Left cardiac atrium (tissue), 4 donors: ENCODE measurements at regions of chr14 and their contacts with region 1.

Region 1: GRCh38 chr14:64671591-64671990 is 32.6 kb upstream of the PLEKHG3 start:
- DNase-seq: no peak
- ATAC-seq: peak; percentile 52 to 76

Region 2: GRCh38 chr14:64636208-64636979 is 35.2 kb before region 1 on chr14:
- intact Hi-C with region 1: no loop called
- DNase-seq: peak; percentile 71
- ATAC-seq: peak; percentile 89 to 91

Region 3: DNA sequence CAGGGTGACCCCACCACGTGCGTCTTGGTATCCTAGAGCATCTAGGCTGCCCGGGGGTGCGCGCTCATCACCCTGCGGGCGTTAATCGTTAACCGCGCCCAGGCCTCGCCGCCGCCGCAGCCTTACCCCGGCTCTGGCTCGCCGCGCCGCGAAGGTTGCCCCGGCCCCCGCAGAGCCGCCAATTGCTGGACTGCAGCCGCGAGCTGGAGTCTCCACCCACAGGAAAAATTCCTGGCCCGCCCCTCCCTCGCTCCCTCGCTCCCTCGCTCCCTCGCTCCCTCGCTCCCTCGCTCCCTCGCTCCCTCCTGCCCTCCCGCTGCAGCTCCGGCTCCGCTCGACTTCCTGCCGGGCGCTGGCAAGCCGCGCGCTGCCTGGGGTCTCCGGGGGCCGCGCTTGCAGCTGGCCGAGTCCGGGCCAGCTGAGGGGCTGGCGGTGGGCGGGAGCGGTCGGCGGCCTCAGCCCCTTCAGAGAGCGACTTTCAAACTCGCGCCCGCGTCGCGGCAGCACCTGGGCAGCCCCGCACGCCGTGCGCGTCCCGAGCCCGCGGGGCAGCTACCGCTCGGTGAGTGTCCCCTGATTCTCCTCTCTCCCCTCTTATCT is 32.7 kb after region 1 on chr14 and contains the start of gene PLEKHG3:
- intact Hi-C with region 1: no loop called
- DNase-seq: peak; percentile 87
- ATAC-seq: peak; percentile 80 to 86
- total RNA-seq, gene PLEKHG3: 29.4 to 37.7 TPM

Region 4: GRCh38 chr14:64745511-64746091 is 74.0 kb after region 1 on chr14:
- intact Hi-C with region 1: loop called in 1 of 2 experiments (anchors 5 kb)
- DNase-seq: no peak
- ATAC-seq: peak; percentile 45 to 67

Region 5: DNA sequence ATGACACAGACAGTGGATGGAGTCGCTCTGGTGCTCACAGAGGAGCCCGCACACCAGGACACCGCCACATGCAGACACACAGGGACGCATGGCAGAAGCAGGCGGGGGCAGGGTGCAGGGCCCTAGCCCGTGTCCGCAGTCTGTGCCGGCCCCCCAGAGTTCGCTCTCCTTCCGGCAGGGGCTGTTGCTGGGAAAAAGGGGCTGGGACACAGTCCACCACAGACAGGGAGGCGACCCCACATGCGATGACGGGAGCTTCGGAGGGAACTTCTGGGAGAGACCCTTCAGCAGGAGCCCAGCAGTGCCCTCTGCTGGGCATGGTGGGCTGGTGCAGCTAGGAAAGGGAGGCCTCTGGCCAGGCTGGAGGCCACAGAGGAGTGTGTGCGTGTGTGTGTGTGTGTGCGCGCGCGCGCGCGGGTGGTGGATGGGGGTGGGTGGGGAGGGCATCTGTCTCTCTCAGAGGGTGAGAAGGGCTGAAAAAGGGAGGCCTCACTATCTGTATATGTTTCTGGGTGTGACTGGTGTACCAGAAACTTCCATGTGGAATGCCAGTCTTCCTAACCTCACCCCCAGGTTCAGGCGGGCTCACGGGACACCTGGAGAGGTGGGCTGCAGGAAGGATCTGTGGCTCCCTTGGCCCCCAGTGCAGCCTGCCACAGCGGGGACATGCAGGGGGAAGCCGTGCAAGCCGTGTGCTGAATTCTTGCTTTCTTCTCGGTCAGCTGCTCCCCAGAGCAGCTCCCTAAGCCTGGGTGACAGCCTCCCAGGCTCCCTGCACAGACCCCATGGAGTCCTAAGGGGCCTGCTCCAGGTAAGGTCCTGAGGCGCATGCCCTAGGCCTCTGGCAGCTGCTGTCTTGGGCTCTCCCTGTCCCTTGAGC is 93.3 kb after region 1 on chr14:
- intact Hi-C with region 1: loop called (anchors 2 to 5 kb)
- DNase-seq: peak; percentile 75
- ATAC-seq: peak; percentile 52 to 62